Astrocyte of the cerebellum (primary cell): ENCODE measurements at regions of chr4 and their contacts with region 1.

Region 1: GRCh38 chr4:79311279-79311678 is 14.6 kb downstream of the NAA11 start:
- DNase-seq: no peak
- H3K4me3 ChIP-seq: no peak overlapping the region
- CTCF ChIP-seq: no peak

Region 2: GRCh38 chr4:79385641-79386040 is 74.4 kb after region 1 on chr4:
- in situ Hi-C with region 1: loop called (anchors 5 kb)
- DNase-seq: no peak
- H3K4me3 ChIP-seq: no peak overlapping the region
- CTCF ChIP-seq: no peak